ENCODE measurements at regions of chr3 and their contacts with region 1.

Region 1: DNA sequence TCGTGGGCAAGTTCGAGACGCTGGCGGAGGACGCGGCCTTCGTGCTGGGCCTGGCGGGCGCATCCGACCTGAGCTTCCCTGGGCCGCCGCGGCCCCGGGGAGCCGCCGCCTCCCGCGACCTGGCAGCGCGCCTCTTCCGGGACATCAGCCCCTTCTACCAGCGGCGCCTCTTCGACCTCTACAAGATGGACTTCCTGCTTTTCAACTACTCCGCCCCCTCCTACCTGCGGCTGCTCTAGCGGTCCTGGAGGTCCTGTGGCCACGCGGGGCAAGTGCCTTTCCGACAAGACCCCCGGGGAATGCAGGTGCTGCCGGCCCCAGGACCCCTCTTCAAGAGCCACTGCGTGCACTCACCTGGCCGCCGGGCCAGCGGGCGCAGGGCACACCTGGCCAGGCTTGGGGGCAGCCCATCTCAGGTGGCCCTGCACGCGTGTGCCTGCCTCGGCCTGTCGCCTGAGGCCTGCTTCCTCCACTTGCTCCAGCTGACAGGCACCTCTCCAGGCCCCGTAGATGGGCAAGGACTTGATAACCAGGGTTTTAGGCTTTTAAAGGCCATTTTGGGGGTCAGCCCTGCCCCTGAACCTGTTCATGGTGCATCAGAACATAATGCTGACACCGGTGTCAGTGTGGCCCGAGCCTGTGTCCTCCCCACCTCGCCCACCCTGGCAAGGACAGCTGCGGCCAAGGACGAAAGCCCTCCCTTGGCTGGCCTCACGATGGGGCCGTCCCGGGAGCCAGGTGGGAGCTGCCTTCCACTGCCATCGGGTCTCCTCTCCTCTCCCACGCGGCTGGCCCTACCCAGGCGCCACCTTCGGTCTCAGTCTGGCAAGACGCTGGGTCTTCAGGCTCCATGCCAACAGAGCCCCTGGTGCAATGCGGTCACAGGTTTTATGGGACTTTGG is 16.1 kb downstream of the C3orf22 start:
- DNase-seq: peak in 3 of 5 donors; percentile 3 to 26 (median 4)
- H3K4me3 ChIP-seq: no peak overlapping the region
- H3K27ac ChIP-seq: no peak overlapping the region
- H3K4me1 ChIP-seq: no peaks in the 10 kb centered on the region
- H3K27me3 ChIP-seq: no peaks in the 10 kb centered on the region
- CTCF ChIP-seq: no peak
- EP300 ChIP-seq: no peak
- POLR2A ChIP-seq: no peak

Region 2: GRCh38 chr3:126498929-126499328 is 43.7 kb before region 1 on chr3:
- intact Hi-C with region 1: no loop called
- DNase-seq: no peak
- H3K4me3 ChIP-seq: no peak overlapping the region
- H3K27ac ChIP-seq: no peak overlapping the region
- H3K4me1 ChIP-seq: no peaks in the 10 kb centered on the region
- H3K27me3 ChIP-seq: no peaks in the 10 kb centered on the region
- CTCF ChIP-seq: no peak
- EP300 ChIP-seq: no peak
- POLR2A ChIP-seq: no peak

Region 3: GRCh38 chr3:126580746-126581145 is 38.2 kb after region 1 on chr3:
- intact Hi-C with region 1: loop called in 1 of 4 experiments (anchors 1 kb)
- DNase-seq: no peak
- H3K4me3 ChIP-seq: no peak overlapping the region
- H3K27ac ChIP-seq: no peak overlapping the region
- H3K4me1 ChIP-seq: no peaks in the 10 kb centered on the region
- H3K27me3 ChIP-seq: no peaks in the 10 kb centered on the region
- CTCF ChIP-seq: no peak
- EP300 ChIP-seq: no peak
- POLR2A ChIP-seq: no peak

Measured in ovary (tissue), 10 donors.